ENCODE measurements at regions of chr1 and their contacts with region 1.

Region 1: GRCh38 chr1:4944911-4945310 is 290.5 kb downstream of the AJAP1 start:
- DNase-seq: no peak
- ATAC-seq: no peak
- H3K4me3 ChIP-seq: no peak overlapping the region
- H3K27ac ChIP-seq: no peak overlapping the region
- H3K4me1 ChIP-seq: no peaks in the 10 kb centered on the region
- H3K27me3 ChIP-seq: no peaks in the 10 kb centered on the region; a peak in 1 of 4 replicates
- CTCF ChIP-seq: no peak
- EP300 ChIP-seq: no peak
- POLR2A ChIP-seq: no peak
- RAD21 ChIP-seq: no peak

Region 2: DNA sequence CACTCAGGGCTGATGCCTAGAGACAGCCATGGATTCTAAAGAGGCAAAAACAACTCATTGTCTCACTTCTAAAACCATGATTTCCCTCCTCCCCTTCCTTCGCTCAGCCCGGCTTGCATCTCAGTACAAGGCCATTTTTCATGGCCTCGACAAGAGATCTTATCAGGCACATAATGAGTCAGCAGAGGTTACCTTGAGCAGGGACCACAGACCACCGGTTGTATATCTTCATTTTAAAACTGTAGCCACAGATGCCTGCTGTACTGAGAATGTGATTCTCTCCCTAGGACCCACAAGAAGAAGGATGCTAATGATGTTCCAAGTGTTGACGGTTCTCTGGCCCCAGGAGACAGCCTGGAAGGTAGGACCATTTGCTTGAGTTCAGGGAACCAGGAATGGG is 41.4 kb after region 1 on chr1:
- CTCF ChIA-PET with region 1: no interaction called
- POLR2A ChIA-PET with region 1: no interaction called
- RAD21 ChIA-PET with region 1: no interaction called
- SMC1A ChIA-PET with region 1: no interaction called
- in situ Hi-C with region 1: loop called (anchors 5 kb)
- intact Hi-C with region 1: no loop called
- DNase-seq: no peak
- ATAC-seq: no peak
- H3K4me3 ChIP-seq: no peak overlapping the region
- H3K27ac ChIP-seq: no peak overlapping the region
- H3K4me1 ChIP-seq: no peaks in the 10 kb centered on the region
- H3K27me3 ChIP-seq: no peaks in the 10 kb centered on the region
- CTCF ChIP-seq: no peak
- EP300 ChIP-seq: no peak
- POLR2A ChIP-seq: no peak
- RAD21 ChIP-seq: no peak

Region 3: DNA sequence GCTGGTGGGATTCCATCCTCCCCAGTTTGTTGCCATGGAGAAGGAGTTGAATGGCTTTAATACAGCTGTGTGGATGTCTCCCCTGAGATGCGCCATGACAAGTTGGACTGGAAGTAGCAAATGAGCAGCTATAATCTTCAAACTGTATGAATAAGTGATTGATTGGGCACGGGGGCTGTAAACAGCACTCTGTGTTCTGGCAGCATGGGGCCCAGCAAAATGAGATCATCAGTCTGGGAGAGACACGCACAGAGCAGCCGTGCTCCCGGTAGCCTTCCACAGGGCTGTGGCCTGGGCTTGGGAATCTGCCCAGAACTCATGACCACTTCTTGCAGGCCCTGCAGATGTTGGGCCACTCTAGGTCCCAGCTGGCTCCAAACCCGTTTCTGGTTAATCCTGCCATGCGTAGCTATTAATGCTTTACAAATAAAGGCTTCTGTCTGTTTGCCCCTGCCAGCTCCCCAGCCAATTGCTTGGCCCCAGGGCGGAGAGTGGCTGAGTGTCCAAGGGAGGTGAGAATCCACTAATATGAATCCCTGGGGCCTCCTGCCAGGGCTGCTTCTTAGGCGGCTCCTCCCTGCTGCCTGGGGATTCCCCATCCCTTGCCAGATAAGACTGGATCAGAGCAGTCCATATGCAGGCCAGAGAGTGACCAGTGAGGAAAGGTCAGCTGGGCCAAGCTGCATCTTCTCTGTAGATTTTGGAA is 352.4 kb after region 1 on chr1:
- CTCF ChIA-PET with region 1: no interaction called
- POLR2A ChIA-PET with region 1: no interaction called
- RAD21 ChIA-PET with region 1: no interaction called
- SMC1A ChIA-PET with region 1: no interaction called
- in situ Hi-C with region 1: no loop called
- intact Hi-C with region 1: no loop called
- DNase-seq: no peak
- ATAC-seq: no peak
- H3K4me3 ChIP-seq: no peak overlapping the region
- H3K27ac ChIP-seq: no peak overlapping the region
- H3K4me1 ChIP-seq: no peaks in the 10 kb centered on the region
- H3K27me3 ChIP-seq: no peaks in the 10 kb centered on the region
- CTCF ChIP-seq: no peak
- EP300 ChIP-seq: no peak
- POLR2A ChIP-seq: no peak
- RAD21 ChIP-seq: no peak

Measured in GM12878 (cell line).